GM12878 (cell line): ENCODE measurements at regions of chr13 and their contacts with region 1.

Region 1: GRCh38 chr13:45047394-45048310 is 58.3 kb downstream of the GPALPP1 start:
- DNase-seq: peak; percentile 24
- ATAC-seq: peak; percentile 96
- H3K4me3 ChIP-seq: peak overlapping the region; percentile 28; the same call in 1 of the 2 replicates
- H3K27ac ChIP-seq: no peak overlapping the region
- H3K4me1 ChIP-seq: peaks cover 10% of the 10 kb centered on the region
- H3K27me3 ChIP-seq: no peaks in the 10 kb centered on the region
- CTCF ChIP-seq: peak; percentile 94 to 99 (median 95); a peak in 5 of 6 replicates
- EP300 ChIP-seq: no peak
- POLR2A ChIP-seq: no peak
- RAD21 ChIP-seq: peak; percentile 91

Region 2: GRCh38 chr13:45119991-45120864 is 72.6 kb after region 1 on chr13 and contains the start of gene GTF2F2:
- CTCF ChIA-PET with region 1: interaction called, 7 read pairs
- POLR2A ChIA-PET with region 1: no interaction called
- RAD21 ChIA-PET with region 1: no interaction called
- SMC1A ChIA-PET with region 1: interaction called, 3 read pairs
- in situ Hi-C with region 1: no loop called
- intact Hi-C with region 1: loop called (anchors 5 kb)
- DNase-seq: peak; percentile 72
- ATAC-seq: peak; percentile 87
- H3K4me3 ChIP-seq: peak within 1 kb of the TSS; percentile 89
- H3K27ac ChIP-seq: peak within 1 kb of the TSS; percentile 83
- H3K4me1 ChIP-seq: no peaks in the 10 kb centered on the region
- H3K27me3 ChIP-seq: no peaks in the 10 kb centered on the region
- CTCF ChIP-seq: no peak
- EP300 ChIP-seq: no peak
- POLR2A ChIP-seq: peak; percentile 79
- RAD21 ChIP-seq: no peak
- polyA plus RNA-seq, gene GTF2F2: 14.5 to 23.3 TPM

Region 3: GRCh38 chr13:45280751-45281634 is 233.3 kb after region 1 on chr13:
- CTCF ChIA-PET with region 1: interaction called, 127 read pairs
- POLR2A ChIA-PET with region 1: no interaction called
- RAD21 ChIA-PET with region 1: interaction called, 63 read pairs
- SMC1A ChIA-PET with region 1: interaction called, 49 read pairs
- in situ Hi-C with region 1: loop called (anchors 5 kb)
- intact Hi-C with region 1: loop called (anchors 1 kb)
- DNase-seq: no peak
- ATAC-seq: peak; percentile 99
- H3K4me3 ChIP-seq: no peak overlapping the region
- H3K27ac ChIP-seq: no peak overlapping the region
- H3K4me1 ChIP-seq: no peaks in the 10 kb centered on the region; the same call in 1 of the 2 replicates
- H3K27me3 ChIP-seq: no peaks in the 10 kb centered on the region
- CTCF ChIP-seq: peak; percentile 75 to 85 (median 84)
- EP300 ChIP-seq: no peak
- POLR2A ChIP-seq: no peak
- RAD21 ChIP-seq: peak; percentile 83

Region 4: DNA sequence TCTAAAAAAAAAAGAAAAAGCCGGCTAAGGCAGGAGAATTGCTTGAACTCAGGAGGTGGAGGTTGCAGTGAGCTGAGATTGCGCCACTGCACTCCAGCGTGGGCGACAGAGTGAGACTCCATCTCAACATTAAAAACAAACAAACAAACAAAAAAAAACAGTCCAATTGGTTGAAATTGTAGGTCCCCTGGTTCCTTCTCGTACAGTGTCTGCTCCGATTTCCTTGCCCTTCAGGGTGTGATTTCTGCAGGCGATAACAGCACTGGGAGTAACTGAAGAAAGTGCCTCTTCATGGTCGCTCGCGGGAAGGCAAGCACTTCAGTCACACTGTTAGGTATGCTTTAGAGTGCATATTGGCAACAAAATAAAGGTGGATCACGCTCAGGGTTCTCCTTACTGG is 253.6 kb after region 1 on chr13:
- CTCF ChIA-PET with region 1: interaction called, 108 read pairs
- POLR2A ChIA-PET with region 1: no interaction called
- RAD21 ChIA-PET with region 1: interaction called, 43 read pairs
- SMC1A ChIA-PET with region 1: interaction called, 26 read pairs
- in situ Hi-C with region 1: loop called (anchors 5 kb)
- intact Hi-C with region 1: no loop called
- DNase-seq: no peak
- ATAC-seq: no peak
- H3K4me3 ChIP-seq: no peak overlapping the region
- H3K27ac ChIP-seq: no peak overlapping the region
- H3K4me1 ChIP-seq: no peaks in the 10 kb centered on the region; the same call in 1 of the 2 replicates
- H3K27me3 ChIP-seq: no peaks in the 10 kb centered on the region
- CTCF ChIP-seq: no peak
- EP300 ChIP-seq: no peak
- POLR2A ChIP-seq: no peak
- RAD21 ChIP-seq: no peak

Region 5: DNA sequence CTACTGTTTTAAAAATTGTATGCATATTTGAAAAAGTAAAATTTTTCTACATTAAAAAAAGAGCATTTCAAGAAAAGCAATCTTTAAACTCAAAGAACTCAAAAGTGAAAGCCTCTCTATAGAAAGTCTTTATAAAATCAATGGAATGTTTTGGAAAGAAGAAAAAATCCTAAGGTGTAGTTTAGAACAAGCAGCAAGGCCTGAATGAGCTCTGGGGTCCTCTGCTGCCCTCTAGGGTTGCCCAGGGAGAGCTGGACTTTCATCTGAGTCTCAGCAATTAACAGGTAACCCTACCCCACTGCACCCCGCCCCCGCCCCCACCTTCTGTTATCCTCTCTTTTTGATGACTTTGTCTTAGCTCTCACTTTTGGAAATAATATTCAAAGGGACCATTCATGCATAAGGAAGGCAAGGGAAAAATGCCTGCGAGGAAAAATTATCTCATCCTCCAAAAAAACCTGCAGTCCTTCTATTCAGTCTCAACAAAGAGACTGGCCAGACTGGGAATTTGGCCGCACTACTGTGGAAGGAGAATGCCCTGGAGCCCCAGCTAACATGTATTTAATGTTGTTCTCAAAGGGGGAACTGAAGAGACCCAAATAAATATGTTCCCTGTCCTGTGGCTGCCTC is 346.4 kb after region 1 on chr13:
- CTCF ChIA-PET with region 1: no interaction called
- POLR2A ChIA-PET with region 1: no interaction called
- RAD21 ChIA-PET with region 1: no interaction called
- SMC1A ChIA-PET with region 1: interaction called, 4 read pairs
- in situ Hi-C with region 1: no loop called
- intact Hi-C with region 1: loop called (anchors 5 kb)
- DNase-seq: no peak
- ATAC-seq: peak; percentile 87
- H3K4me3 ChIP-seq: no peak overlapping the region
- H3K27ac ChIP-seq: no peak overlapping the region
- H3K4me1 ChIP-seq: peaks cover 10% of the 10 kb centered on the region
- H3K27me3 ChIP-seq: no peaks in the 10 kb centered on the region
- CTCF ChIP-seq: peak; percentile 44 to 70 (median 68); a peak in 5 of 6 replicates
- EP300 ChIP-seq: no peak
- POLR2A ChIP-seq: no peak
- RAD21 ChIP-seq: peak; percentile 50